Posterior vena cava (tissue), 2 donors: ENCODE measurements at regions of chr3 and their contacts with region 1.

Region 1: GRCh38 chr3:81643721-81644120 is 117.7 kb downstream of the GBE1 start:
- DNase-seq: no peak

Region 2: DNA sequence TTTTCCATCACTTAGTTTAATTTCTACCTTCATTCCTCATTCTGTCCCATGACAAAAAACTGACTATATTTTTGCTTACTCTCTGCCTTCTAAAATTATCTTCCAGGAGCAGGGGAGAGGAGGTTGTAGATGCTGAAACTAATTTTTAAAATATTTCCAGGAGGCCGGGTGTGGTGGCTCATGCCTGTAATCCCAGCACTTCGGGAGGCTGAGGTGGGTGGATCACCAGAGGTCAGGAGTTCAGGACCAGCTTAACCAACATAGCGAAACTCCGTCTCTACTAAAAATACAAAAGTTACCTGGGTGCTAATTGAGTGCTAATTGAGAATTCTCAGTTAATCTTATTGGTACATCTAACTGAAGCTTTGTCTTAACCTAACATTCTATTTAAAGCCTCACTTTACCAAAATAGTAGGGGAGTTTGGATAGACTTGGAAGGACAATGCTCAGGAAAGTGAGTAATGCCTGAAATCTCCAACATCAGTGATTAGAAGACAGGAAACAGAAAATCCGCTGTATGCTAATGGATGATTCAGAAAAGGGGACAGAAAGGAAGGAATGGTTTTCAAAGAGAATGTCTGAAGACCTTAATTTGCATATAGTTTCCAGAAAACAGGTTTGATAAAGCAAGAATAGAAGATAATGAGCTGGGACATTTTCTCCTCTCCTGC is 218.4 kb before region 1 on chr3:
- intact Hi-C with region 1: loop called in 1 of 2 experiments (anchors 10 kb)
- DNase-seq: no peak

Region 3: DNA sequence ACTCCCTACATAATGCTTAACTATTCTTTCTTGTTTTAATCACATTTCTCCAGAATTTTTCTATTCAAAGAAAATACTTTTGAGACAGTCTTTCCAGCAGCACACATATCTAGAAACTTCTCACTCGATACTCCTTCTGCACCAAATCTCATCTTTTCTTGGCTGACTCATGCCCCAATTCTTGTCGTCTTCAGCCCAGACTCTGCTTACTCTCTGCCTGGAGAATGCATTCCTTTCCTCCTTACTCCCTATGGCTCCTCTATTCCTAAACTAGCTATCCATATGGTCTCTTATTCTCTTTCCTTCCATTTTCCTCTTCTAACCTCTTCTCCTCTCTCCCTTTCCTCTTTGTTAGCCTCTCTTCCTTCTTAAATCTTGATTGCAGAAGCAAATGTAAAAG is 40.9 kb before region 1 on chr3:
- intact Hi-C with region 1: no loop called
- DNase-seq: no peak